A673 (cell line): ENCODE measurements at regions of chr2 and their contacts with region 1.

Region 1: GRCh38 chr2:36625304-36625703 is 27.3 kb upstream of the FEZ2 start:
- DNase-seq: no peak
- H3K4me3 ChIP-seq: no peak overlapping the region
- H3K27ac ChIP-seq: no peak overlapping the region
- H3K4me1 ChIP-seq: no peaks in the 10 kb centered on the region
- H3K27me3 ChIP-seq: no peaks in the 10 kb centered on the region
- CTCF ChIP-seq: no peak

Region 2: DNA sequence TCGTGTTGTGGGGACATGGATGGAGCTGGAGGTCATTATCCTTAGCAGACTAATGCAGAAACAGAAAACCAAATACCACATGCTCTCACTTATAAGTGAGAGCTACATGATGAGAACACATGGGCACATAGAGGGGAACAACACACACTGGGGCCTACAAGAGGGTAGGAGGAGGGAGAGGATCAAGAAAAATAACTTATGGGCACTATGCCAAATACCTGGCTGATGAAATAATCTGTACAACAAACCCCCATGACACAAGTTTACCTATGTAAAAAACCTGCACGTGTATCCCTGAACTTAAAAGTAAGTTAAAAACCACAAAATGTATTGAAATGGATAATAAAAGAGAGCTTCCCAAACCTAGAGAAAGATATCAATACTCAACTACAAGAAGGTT is 13.6 kb after region 1 on chr2:
- CTCF ChIA-PET with region 1: no interaction called
- POLR2A ChIA-PET with region 1: no interaction called
- intact Hi-C with region 1: loop called (anchors 2 kb)
- DNase-seq: no peak
- H3K4me3 ChIP-seq: no peak overlapping the region
- H3K27ac ChIP-seq: no peak overlapping the region
- H3K4me1 ChIP-seq: peaks cover 4% of the 10 kb centered on the region
- H3K27me3 ChIP-seq: no peaks in the 10 kb centered on the region
- CTCF ChIP-seq: no peak

Region 3: GRCh38 chr2:36663851-36664695 is 38.8 kb after region 1 on chr2:
- CTCF ChIA-PET with region 1: no interaction called
- POLR2A ChIA-PET with region 1: no interaction called
- intact Hi-C with region 1: no loop called
- DNase-seq: peak; percentile 88
- H3K4me3 ChIP-seq: no peak overlapping the region
- H3K27ac ChIP-seq: no peak overlapping the region
- H3K4me1 ChIP-seq: no peaks in the 10 kb centered on the region
- H3K27me3 ChIP-seq: no peaks in the 10 kb centered on the region
- CTCF ChIP-seq: peak; percentile 87

Region 4: DNA sequence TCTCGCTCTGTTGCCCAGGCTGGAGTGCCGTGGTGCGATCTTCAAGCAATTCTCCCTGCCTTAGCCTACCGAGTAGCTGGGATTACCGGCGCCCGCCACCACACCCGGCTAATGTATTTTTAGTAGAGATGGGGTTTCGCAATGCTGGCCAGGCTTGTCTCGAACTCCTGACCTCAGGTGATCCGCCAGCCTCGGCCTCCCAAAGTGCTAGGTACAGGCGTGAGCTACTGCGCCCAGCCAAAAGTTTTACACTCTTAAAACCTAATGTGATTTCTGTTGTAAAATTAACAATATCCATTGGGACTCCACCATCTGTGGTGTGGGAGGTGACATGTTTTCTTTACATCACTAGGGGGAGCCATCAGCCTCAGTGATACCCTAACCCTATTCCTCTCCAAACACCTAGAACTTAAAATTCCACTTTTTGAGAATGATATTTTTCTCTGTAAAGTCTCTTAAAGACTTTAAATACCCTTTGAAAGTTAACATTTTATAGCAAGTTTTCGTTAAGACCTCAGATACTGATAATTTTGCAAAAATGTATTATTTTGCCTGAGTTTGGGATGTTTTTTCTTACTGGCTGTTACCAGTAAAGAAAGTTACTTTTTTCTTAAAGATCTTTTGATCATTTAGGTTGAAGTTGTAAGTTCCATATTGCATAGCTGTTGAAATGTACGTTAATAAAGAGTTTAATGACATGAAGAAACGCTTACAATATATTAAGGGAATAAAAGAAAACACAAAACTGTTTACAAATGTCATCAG is 543.1 kb after region 1 on chr2:
- CTCF ChIA-PET with region 1: no interaction called
- POLR2A ChIA-PET with region 1: no interaction called
- intact Hi-C with region 1: no loop called
- DNase-seq: peak; percentile 75
- H3K4me3 ChIP-seq: no peak overlapping the region
- H3K27ac ChIP-seq: no peak overlapping the region
- H3K4me1 ChIP-seq: no peaks in the 10 kb centered on the region
- H3K27me3 ChIP-seq: no peaks in the 10 kb centered on the region
- CTCF ChIP-seq: peak; percentile 83